ENCODE measurements at regions of chr6 and their contacts with region 1.

Region 1: GRCh38 chr6:85642774-85643536 is at the start of gene SYNCRIP:
- DNase-seq: peak; percentile 98
- H3K4me3 Mint-ChIP-seq: peak within 1 kb of the TSS; percentile 84
- H3K27ac Mint-ChIP-seq: peak within 1 kb of the TSS; percentile 99
- H3K4me1 Mint-ChIP-seq: peaks cover 37% of the 10 kb centered on the region
- H3K27me3 Mint-ChIP-seq: no peaks in the 10 kb centered on the region
- total RNA-seq, gene SYNCRIP: 106 to 109 TPM

Region 2: GRCh38 chr6:83859410-83860358 is 1783.3 kb before region 1 on chr6 and contains the start of gene CYB5R4:
- CTCF ChIA-PET with region 1: no interaction called
- intact Hi-C with region 1: loop called (anchors 1 kb)
- DNase-seq: peak; percentile 96
- H3K4me3 Mint-ChIP-seq: peak within 1 kb of the TSS; percentile 100
- H3K27ac Mint-ChIP-seq: peak within 1 kb of the TSS; percentile 82
- H3K4me1 Mint-ChIP-seq: peaks cover 28% of the 10 kb centered on the region
- H3K27me3 Mint-ChIP-seq: peaks cover 12% of the 10 kb centered on the region
- total RNA-seq, gene CYB5R4: 23.5 to 24.5 TPM

Region 3: GRCh38 chr6:85516168-85516567 is 126.8 kb before region 1 on chr6:
- CTCF ChIA-PET with region 1: no interaction called
- intact Hi-C with region 1: no loop called
- DNase-seq: no peak
- H3K4me3 Mint-ChIP-seq: no peak overlapping the region
- H3K27ac Mint-ChIP-seq: no peak overlapping the region
- H3K4me1 Mint-ChIP-seq: no peaks in the 10 kb centered on the region
- H3K27me3 Mint-ChIP-seq: no peaks in the 10 kb centered on the region

Region 4: GRCh38 chr6:85593438-85594196 is 49.3 kb before region 1 on chr6 and contains the start of gene SNX14:
- CTCF ChIA-PET with region 1: no interaction called
- intact Hi-C with region 1: loop called (anchors 1 kb)
- DNase-seq: peak; percentile 77
- H3K4me3 Mint-ChIP-seq: peak within 1 kb of the TSS; percentile 93
- H3K27ac Mint-ChIP-seq: peak within 1 kb of the TSS; percentile 94
- H3K4me1 Mint-ChIP-seq: peaks cover 30% of the 10 kb centered on the region
- H3K27me3 Mint-ChIP-seq: no peaks in the 10 kb centered on the region
- total RNA-seq, gene SNX14: 18.8 to 22.6 TPM

Region 5: GRCh38 chr6:85620308-85620707 is 22.6 kb before region 1 on chr6:
- CTCF ChIA-PET with region 1: interaction called, 3 read pairs
- intact Hi-C with region 1: loop called (anchors 2 kb)
- DNase-seq: no peak
- H3K4me3 Mint-ChIP-seq: no peak overlapping the region
- H3K27ac Mint-ChIP-seq: peak overlapping the region; percentile 10
- H3K4me1 Mint-ChIP-seq: peaks cover 35% of the 10 kb centered on the region
- H3K27me3 Mint-ChIP-seq: no peaks in the 10 kb centered on the region

Region 6: GRCh38 chr6:85678602-85679444 is 35.9 kb after region 1 on chr6:
- CTCF ChIA-PET with region 1: interaction called, 17 read pairs
- intact Hi-C with region 1: loop called (anchors 1 kb)
- DNase-seq: peak; percentile 96
- H3K4me3 Mint-ChIP-seq: peak overlapping the region; percentile 97
- H3K27ac Mint-ChIP-seq: peak overlapping the region; percentile 96
- H3K4me1 Mint-ChIP-seq: peaks cover 31% of the 10 kb centered on the region
- H3K27me3 Mint-ChIP-seq: no peaks in the 10 kb centered on the region

Measured in activated naive CD4-positive, alpha-beta T cell treated with anti-CD3 and anti-CD28 coated beads for 36 hours (primary cell).